GM12878 (cell line): ENCODE measurements at regions of chr4 and their contacts with region 1.

Region 1: GRCh38 chr4:86993909-86994681 is 59.3 kb downstream of the AFF1 start:
- DNase-seq: no peak
- ATAC-seq: no peak
- H3K4me3 ChIP-seq: no peak overlapping the region
- H3K27ac ChIP-seq: no peak overlapping the region
- H3K4me1 ChIP-seq: peaks cover 22% of the 10 kb centered on the region
- H3K27me3 ChIP-seq: no peaks in the 10 kb centered on the region
- CTCF ChIP-seq: no peak
- EP300 ChIP-seq: no peak
- POLR2A ChIP-seq: no peak
- RAD21 ChIP-seq: no peak

Region 2: DNA sequence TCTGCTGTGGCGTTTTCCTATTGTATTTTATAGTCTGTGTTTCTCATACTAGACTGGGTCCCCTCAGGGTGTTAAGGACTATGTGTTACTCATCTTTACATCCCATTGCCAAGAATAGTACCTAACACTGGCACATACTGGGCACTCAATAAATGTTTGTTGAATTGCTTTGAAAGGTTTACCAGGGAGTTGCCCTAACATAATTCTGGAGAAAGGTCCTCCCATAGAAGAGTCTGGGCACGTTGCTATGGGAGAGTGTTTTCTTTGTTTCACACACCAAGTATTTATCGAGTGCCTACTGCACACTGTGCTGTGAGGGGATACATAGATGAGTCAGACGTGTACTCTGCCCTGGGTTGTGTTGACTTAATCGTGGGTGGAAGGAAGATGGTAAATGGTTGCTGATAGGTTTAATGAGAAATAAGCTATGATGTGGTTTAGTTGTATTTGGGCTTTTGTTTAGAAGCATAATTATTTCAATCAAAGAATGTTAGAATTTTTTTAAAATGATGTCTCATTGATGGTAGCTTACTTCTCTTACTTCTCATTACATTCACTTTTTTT is 16.4 kb before region 1 on chr4:
- CTCF ChIA-PET with region 1: interaction called, 7 read pairs
- POLR2A ChIA-PET with region 1: interaction called, 8 read pairs
- RAD21 ChIA-PET with region 1: interaction called, 5 read pairs
- SMC1A ChIA-PET with region 1: interaction called, 10 read pairs
- in situ Hi-C with region 1: no loop called
- intact Hi-C with region 1: no loop called
- DNase-seq: peak; percentile 67
- ATAC-seq: peak; percentile 96
- H3K4me3 ChIP-seq: peak overlapping the region; percentile 31; the same call in 1 of the 2 replicates
- H3K27ac ChIP-seq: peak overlapping the region; percentile 55
- H3K4me1 ChIP-seq: peaks cover 41% of the 10 kb centered on the region
- H3K27me3 ChIP-seq: no peaks in the 10 kb centered on the region
- CTCF ChIP-seq: no peak
- EP300 ChIP-seq: peak in 1 of 2 experiments; percentile 74; a peak in 1 of 4 replicates
- POLR2A ChIP-seq: no peak
- RAD21 ChIP-seq: no peak